ENCODE measurements at regions of chr11 and their contacts with region 1.

Region 1: DNA sequence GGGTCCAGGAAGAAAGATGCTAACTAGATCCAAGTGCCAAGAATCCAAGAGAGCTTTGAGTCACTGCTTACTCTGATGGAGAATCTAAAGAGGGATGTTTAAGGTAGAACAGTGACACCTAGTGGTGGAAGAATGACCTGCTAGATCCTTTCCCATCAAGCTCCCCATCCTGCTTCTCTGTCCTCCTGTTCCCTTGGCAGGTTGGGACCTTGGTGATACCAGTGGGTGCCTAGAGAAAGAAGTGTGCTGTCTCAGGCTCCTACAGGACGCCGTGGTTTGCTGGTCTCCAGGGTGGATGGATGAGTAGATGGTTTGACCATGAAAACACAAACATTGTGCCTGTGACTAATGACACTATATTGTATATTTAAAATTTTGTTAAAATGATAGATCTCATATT is 383.7 kb downstream of the TMEM135 start:
- DNase-seq: peak in 1 of 10 donors; percentile 14

Region 2: DNA sequence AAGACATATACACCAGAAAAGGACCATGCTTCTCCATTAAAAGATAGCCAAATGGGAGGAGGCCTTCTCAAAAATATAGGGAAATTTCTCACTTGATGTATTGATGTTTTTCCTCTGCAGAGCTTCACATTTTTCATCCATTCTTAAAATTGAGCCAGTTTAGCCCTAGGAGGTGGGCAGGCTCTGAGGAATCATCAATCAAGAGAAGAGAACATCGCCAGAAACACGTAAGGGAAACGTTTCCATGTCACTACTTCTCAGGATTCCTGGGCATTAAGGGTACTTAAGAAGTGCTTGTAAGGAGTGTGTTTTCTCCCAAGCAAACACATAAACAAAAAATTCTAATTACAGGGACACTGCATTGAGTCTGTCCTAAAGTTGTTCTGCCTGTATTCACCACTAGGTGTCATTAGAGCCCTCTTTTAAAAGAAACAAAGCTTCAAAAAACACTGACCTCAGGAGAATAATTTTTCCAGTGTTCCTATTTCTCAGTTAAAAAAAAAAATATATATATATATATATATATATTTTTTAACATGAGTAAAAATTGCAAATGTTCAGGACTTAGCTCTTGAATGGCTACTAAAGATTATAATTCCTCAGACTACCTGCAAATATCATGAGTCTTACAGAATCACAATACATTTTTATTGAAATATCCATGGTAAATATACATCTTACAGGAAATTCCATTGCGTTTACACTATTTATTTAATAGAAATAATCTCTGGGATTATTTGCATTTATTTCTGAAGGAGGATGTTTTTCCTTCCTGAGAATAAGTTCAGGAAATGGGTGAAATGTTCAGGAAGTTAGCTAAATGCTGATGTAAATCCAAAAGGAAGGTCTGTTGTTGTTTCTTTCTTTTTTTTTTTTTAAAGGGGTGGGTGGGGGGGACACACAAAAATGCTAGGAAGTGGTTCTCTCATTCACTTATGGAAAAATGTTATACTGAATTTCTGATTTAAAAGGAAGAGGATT is 482.2 kb before region 1 on chr11:
- intact Hi-C with region 1: loop called (anchors 2 kb)
- DNase-seq: no peak

Region 3: GRCh38 chr11:87352759-87353707 is 68.4 kb before region 1 on chr11:
- intact Hi-C with region 1: loop called (anchors 1 kb)
- DNase-seq: peak; percentile 71 to 98 (median 90)

Region 4: GRCh38 chr11:87518266-87518665 is 96.8 kb after region 1 on chr11:
- intact Hi-C with region 1: no loop called
- DNase-seq: no peak

Measured in posterior cingulate gyrus (tissue), 11 donors.